Sciatic nerve (tissue), 2 donors: ENCODE measurements at regions of chr7 and their contacts with region 1.

Region 1: DNA sequence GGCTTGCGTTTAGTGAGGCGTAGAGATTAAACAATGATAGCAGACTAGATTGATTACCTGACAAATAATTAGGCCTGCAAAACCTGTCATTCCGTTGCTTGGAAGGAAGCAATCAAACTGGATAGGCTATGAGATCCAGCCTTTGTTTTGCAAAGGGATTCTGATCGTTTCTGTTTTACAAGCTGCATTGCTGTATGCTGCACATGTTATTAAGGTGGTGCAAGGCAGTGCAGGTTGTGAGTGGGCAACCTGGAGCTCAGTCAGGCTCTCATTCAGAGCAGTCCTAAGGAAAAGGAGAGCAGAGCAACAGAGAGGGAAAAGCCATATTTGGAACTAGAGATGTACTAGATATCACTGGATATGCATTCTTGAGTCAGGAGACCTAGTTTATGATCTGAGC is 6.9 kb upstream of the NOBOX start:
- DNase-seq: no peak
- ATAC-seq: no peak

Region 2: DNA sequence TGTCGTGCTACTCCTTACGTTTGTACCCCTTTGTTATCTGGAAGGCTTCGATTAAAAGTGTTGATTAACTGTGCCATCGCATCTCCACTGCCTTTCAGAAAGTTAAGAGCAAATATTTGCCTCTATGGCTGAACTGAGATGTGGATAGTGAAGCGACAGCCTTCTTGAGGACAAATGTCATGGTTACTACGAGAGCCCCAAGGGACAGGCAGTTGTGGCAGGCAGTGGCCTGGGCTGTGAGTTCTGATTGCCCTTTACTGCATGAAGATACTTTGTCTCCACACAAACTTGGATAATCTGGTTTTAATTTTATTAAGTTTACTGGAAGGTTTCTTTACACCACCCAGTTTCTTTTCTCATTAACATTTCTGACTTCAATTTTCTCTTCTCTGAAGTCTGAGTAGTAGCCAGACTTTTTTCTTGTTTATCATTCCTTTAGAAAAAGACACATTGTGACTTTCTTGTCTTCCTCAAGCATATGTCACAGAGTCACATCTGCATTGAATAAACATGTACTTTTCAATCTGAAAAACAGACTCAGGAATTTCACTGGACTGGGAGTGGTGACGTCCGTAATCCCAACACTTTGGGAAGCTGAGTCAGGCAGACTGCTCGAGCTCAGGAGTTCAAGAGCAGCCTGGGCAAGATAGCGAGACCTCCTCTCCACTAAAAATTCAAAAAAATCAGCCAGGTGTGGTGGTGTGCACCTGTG is 931.2 kb before region 1 on chr7:
- intact Hi-C with region 1: loop called (anchors 5 kb)
- DNase-seq: no peak
- ATAC-seq: peak; percentile 77